Activated CD8-positive, alpha-beta T cell treated with anti-CD3 and anti-CD28 coated beads for 36 hours (primary cell): ENCODE measurements at regions of chr22 and their contacts with region 1.

Region 1: GRCh38 chr22:37817705-37818408 is 5.3 kb upstream of the GALR3 start:
- DNase-seq: peak; percentile 83
- ATAC-seq: peak; percentile 84
- H3K4me3 Mint-ChIP-seq: no peak overlapping the region
- H3K27ac Mint-ChIP-seq: no peak overlapping the region
- H3K4me1 Mint-ChIP-seq: peaks cover 10% of the 10 kb centered on the region
- H3K27me3 Mint-ChIP-seq: peaks cover 20% of the 10 kb centered on the region
- CTCF ChIP-seq: peak; percentile 97

Region 2: DNA sequence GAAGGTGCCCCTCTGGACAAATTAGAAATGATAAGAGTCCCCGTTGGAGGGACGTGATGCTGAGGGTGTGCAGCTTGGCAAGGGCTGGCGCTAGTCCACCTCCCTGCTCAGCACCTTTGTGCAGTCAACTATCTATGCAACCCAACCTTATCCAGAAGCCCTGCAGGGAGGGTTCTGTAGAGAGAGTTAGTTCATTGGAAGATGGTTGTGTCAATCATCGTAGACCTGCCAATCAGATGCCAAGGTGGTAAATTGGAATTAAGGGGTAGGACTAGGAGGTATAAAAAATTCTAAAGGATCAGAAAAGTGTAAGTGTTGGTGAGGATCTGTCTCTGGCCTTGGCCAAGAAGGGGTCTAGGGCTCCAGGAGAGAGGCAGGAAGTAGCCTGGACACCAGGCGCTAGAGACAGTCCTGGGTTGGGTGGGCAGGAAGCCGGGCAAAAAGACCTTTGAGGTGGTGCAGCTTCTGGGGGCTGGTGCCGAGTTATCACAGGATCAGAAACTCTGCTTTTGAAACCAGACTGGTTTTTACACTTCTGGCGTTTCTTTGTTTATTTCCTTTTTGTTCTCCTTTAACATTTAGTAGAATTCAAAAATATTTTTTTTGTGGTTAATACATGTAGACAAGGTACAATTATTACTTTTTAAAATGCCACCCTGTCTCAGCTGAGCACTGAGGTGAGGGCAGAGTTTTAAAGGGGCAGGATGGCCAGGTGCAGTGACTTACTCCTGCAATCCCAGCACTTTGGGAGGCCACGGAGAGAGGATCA is 631.4 kb before region 1 on chr22:
- CTCF ChIA-PET with region 1: no interaction called
- POLR2A ChIA-PET with region 1: no interaction called
- intact Hi-C with region 1: no loop called
- DNase-seq: peak; percentile 71
- ATAC-seq: peak; percentile 85
- H3K4me3 Mint-ChIP-seq: peak overlapping the region; percentile 70
- H3K27ac Mint-ChIP-seq: peak overlapping the region; percentile 90
- H3K4me1 Mint-ChIP-seq: peaks cover 59% of the 10 kb centered on the region
- H3K27me3 Mint-ChIP-seq: no peaks in the 10 kb centered on the region
- CTCF ChIP-seq: no peak

Region 3: GRCh38 chr22:37696657-37697537 is 121.0 kb before region 1 on chr22 and contains the start of gene TRIOBP:
- CTCF ChIA-PET with region 1: no interaction called
- POLR2A ChIA-PET with region 1: no interaction called
- intact Hi-C with region 1: no loop called
- DNase-seq: peak; percentile 98
- ATAC-seq: peak; percentile 99
- H3K4me3 Mint-ChIP-seq: peak within 1 kb of the TSS; percentile 65
- H3K27ac Mint-ChIP-seq: peak within 1 kb of the TSS; percentile 24
- H3K4me1 Mint-ChIP-seq: peaks cover 14% of the 10 kb centered on the region
- H3K27me3 Mint-ChIP-seq: no peaks in the 10 kb centered on the region
- CTCF ChIP-seq: peak; percentile 46
- total RNA-seq, gene TRIOBP: 17.8 to 20.7 TPM

Region 4: DNA sequence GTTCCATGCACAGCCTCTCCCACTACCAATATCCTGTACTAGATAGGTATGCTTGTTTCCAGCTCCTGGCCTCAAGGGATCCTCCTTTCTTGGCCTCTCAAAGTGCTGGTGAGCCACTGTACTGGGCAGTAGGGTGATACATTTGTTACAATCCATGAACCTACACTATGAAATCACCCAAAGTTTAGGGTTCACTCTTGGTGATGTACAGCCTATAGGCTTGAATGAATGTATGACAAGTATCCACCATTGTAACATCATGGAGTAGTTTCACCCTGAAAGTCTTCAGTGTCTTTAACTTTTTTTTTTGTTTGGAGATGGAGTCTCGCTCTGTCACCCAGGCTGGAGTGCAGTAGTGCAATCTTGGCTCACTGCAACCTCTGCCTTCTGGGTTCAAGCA is 89.2 kb before region 1 on chr22:
- CTCF ChIA-PET with region 1: no interaction called
- POLR2A ChIA-PET with region 1: no interaction called
- intact Hi-C with region 1: no loop called
- DNase-seq: no peak
- ATAC-seq: no peak
- H3K4me3 Mint-ChIP-seq: no peak overlapping the region
- H3K27ac Mint-ChIP-seq: no peak overlapping the region
- H3K4me1 Mint-ChIP-seq: no peaks in the 10 kb centered on the region
- H3K27me3 Mint-ChIP-seq: no peaks in the 10 kb centered on the region
- CTCF ChIP-seq: no peak

Region 5: DNA sequence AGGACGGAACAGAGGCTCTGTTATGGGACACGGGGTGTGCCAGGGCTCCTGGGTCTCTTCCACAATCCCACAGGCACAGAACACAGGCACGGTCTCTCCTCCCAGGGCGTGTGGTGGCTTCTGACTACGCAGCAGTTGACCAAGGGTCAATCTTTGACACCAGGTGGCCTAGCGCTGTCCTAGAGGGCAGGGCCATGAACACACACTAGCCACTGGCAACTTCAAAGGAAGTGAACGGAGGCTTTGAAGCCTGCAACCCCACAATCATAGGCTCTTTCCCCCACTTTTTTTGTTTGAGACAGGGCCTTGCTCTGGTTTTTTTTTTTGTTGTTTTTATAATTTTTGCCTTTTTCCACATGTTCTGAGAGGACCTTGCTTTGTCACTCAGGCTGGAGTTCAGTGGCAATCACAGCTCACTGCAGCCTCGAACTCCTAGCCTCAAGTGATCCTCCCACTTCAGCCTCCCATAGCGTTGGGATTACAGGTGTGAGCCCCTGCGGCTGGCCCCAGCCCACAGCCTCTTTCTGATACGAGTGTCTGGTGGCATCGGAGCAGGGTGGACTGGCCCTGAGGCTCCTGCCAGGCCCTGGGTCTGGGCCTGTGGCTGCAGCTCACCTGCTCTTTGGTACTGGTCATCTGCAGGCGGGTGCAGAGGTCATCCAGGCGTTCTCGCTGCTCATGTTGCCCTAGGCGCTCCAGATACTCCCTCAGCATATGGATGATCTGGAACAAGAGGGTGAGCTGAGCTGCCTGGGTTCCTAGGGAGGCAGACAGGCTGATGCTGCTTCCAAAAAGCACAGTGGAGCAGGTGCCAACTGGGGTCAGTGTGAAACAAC is 14.4 kb after region 1 on chr22:
- CTCF ChIA-PET with region 1: interaction called, 17 read pairs
- POLR2A ChIA-PET with region 1: interaction called, 3 read pairs
- intact Hi-C with region 1: no loop called
- DNase-seq: no peak
- ATAC-seq: no peak
- H3K4me3 Mint-ChIP-seq: no peak overlapping the region
- H3K27ac Mint-ChIP-seq: no peak overlapping the region
- H3K4me1 Mint-ChIP-seq: no peaks in the 10 kb centered on the region
- H3K27me3 Mint-ChIP-seq: no peaks in the 10 kb centered on the region
- CTCF ChIP-seq: no peak

Region 6: GRCh38 chr22:37855462-37855861 is 37.6 kb after region 1 on chr22:
- CTCF ChIA-PET with region 1: interaction called, 28 read pairs
- POLR2A ChIA-PET with region 1: no interaction called
- intact Hi-C with region 1: loop called (anchors 5 kb)
- DNase-seq: no peak
- ATAC-seq: no peak
- H3K4me3 Mint-ChIP-seq: no peak overlapping the region
- H3K27ac Mint-ChIP-seq: no peak overlapping the region
- H3K4me1 Mint-ChIP-seq: peaks cover 38% of the 10 kb centered on the region
- H3K27me3 Mint-ChIP-seq: no peaks in the 10 kb centered on the region
- CTCF ChIP-seq: no peak

Region 7: GRCh38 chr22:37896181-37896592 is 78.3 kb after region 1 on chr22:
- CTCF ChIA-PET with region 1: interaction called, 13 read pairs
- POLR2A ChIA-PET with region 1: interaction called, 3 read pairs
- intact Hi-C with region 1: no loop called
- DNase-seq: peak; percentile 70
- ATAC-seq: peak; percentile 97
- H3K4me3 Mint-ChIP-seq: peak overlapping the region; percentile 27
- H3K27ac Mint-ChIP-seq: peak overlapping the region; percentile 91
- H3K4me1 Mint-ChIP-seq: peaks cover 16% of the 10 kb centered on the region
- H3K27me3 Mint-ChIP-seq: no peaks in the 10 kb centered on the region
- CTCF ChIP-seq: no peak

Region 8: GRCh38 chr22:37965940-37966664 is 148.2 kb after region 1 on chr22:
- CTCF ChIA-PET with region 1: interaction called, 36 read pairs
- POLR2A ChIA-PET with region 1: interaction called, 3 read pairs
- intact Hi-C with region 1: no loop called
- DNase-seq: no peak
- ATAC-seq: no peak
- H3K4me3 Mint-ChIP-seq: no peak overlapping the region
- H3K27ac Mint-ChIP-seq: no peak overlapping the region
- H3K4me1 Mint-ChIP-seq: no peaks in the 10 kb centered on the region
- H3K27me3 Mint-ChIP-seq: no peaks in the 10 kb centered on the region
- CTCF ChIP-seq: no peak